GM12878 (cell line): ENCODE measurements at regions of chr16 and their contacts with region 1.

Region 1: GRCh38 chr16:81006814-81007696 is at the starts of genes CENPN and CMC2:
- DNase-seq: peak; percentile 95
- ATAC-seq: peak; percentile 87
- H3K4me3 ChIP-seq: peak within 1 kb of the TSS; percentile 93
- H3K27ac ChIP-seq: peak within 1 kb of the TSS; percentile 100
- H3K4me1 ChIP-seq: peaks cover 9% of the 10 kb centered on the region
- H3K27me3 ChIP-seq: no peaks in the 10 kb centered on the region
- CTCF ChIP-seq: 0 out of 6 replicates have a peak, but pooled peaks of 2 of the 3 experiments have one; percentile 1 to 7
- EP300 ChIP-seq: peak in 1 of 2 experiments; percentile 54; a peak in 2 of 4 replicates
- POLR2A ChIP-seq: peak; percentile 71
- RAD21 ChIP-seq: no peak
- polyA plus RNA-seq, gene CENPN: 134 to 143 TPM
- polyA plus RNA-seq, gene CMC2: 248 to 251 TPM

Region 2: GRCh38 chr16:80816365-80816764 is 190.7 kb before region 1 on chr16:
- CTCF ChIA-PET with region 1: no interaction called
- POLR2A ChIA-PET with region 1: no interaction called
- RAD21 ChIA-PET with region 1: no interaction called
- SMC1A ChIA-PET with region 1: no interaction called
- in situ Hi-C with region 1: no loop called
- intact Hi-C with region 1: no loop called
- DNase-seq: no peak
- ATAC-seq: no peak
- H3K4me3 ChIP-seq: no peak overlapping the region
- H3K27ac ChIP-seq: no peak overlapping the region
- H3K4me1 ChIP-seq: no peaks in the 10 kb centered on the region
- H3K27me3 ChIP-seq: no peaks in the 10 kb centered on the region
- CTCF ChIP-seq: no peak
- EP300 ChIP-seq: no peak
- POLR2A ChIP-seq: no peak
- RAD21 ChIP-seq: no peak

Region 3: DNA sequence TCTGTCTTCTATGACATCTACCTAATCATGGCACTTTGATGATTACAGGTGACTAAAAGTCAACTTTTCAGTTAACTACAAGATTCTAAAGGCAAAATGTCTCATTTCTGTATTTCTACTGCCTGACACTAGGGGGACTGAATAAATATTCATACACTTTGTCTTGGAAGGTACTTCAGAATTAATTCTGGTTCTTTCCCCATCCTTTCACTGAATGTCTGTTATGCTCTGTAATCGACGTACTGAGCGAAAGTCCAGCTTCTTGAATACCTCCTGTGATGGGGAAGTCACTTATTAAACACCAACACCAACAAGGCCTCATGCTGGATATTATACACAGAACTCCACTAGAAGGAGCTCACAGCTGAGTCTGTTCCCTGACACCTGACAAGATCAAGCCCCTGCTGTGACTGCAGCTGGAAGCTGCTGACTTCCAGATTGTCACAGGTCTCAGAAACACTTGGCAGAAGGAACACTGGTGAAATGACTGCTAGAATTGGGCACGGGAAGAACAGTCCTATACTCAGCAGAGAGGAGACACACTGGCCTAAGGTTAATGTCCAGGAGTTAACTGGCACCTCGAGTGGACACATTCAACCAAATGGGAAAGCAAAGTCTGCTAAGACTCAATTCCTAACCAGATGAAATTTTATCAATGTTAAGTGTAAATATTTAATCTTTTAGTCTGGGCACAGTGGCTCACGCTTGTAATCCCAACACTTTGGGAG is 32.2 kb before region 1 on chr16:
- CTCF ChIA-PET with region 1: interaction called, 11 read pairs
- POLR2A ChIA-PET with region 1: no interaction called
- RAD21 ChIA-PET with region 1: interaction called, 3 read pairs
- SMC1A ChIA-PET with region 1: interaction called, 5 read pairs
- in situ Hi-C with region 1: no loop called
- intact Hi-C with region 1: no loop called
- DNase-seq: no peak
- ATAC-seq: peak; percentile 49
- H3K4me3 ChIP-seq: no peak overlapping the region
- H3K27ac ChIP-seq: no peak overlapping the region
- H3K4me1 ChIP-seq: 0 out of 2 replicates have a peak, but pooled peaks cover 3% of the 10 kb centered on the region
- H3K27me3 ChIP-seq: no peaks in the 10 kb centered on the region
- CTCF ChIP-seq: peak; percentile 23 to 36 (median 26); a peak in 5 of 6 replicates
- EP300 ChIP-seq: no peak
- POLR2A ChIP-seq: no peak
- RAD21 ChIP-seq: 0 out of 2 replicates have a peak, but pooled peaks have one; percentile 5

Region 4: GRCh38 chr16:80986557-80986956 is 20.5 kb before region 1 on chr16:
- CTCF ChIA-PET with region 1: interaction called, 20 read pairs
- POLR2A ChIA-PET with region 1: interaction called, 4 read pairs
- RAD21 ChIA-PET with region 1: interaction called, 3 read pairs
- SMC1A ChIA-PET with region 1: interaction called, 4 read pairs
- in situ Hi-C with region 1: no loop called
- intact Hi-C with region 1: no loop called
- DNase-seq: no peak
- ATAC-seq: no peak
- H3K4me3 ChIP-seq: no peak overlapping the region
- H3K27ac ChIP-seq: no peak overlapping the region
- H3K4me1 ChIP-seq: no peaks in the 10 kb centered on the region
- H3K27me3 ChIP-seq: no peaks in the 10 kb centered on the region
- CTCF ChIP-seq: no peak
- EP300 ChIP-seq: no peak
- POLR2A ChIP-seq: no peak
- RAD21 ChIP-seq: no peak

Region 5: DNA sequence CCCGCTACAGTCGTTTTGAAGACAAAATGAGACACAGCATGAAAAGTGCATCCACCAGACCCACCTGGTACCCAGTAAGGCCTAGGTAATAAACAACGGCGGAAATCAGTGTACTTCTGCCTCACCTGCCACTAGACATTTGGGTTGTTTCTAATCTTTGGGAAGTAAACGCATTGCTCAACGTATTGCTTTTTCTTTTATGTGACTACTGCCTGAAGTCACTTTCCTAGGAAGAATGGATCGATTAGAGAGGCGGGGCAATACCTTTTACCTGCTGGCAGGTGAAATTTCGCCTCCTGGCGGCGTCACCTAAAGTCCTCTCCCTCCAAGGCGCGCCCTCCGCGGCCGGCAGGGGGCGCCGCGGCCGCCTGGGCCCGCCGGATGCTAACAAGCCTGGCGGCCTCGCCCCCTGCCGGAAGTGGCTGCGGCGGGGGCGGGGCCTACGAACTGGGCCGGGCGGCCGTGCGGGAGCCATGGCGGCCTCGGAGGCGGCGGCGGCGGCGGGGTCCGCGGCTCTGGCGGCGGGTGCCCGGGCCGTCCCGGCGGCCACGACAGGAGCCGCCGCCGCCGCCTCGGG is 28.4 kb after region 1 on chr16 and contains the start of gene ATMIN:
- CTCF ChIA-PET with region 1: interaction called, 67 read pairs
- POLR2A ChIA-PET with region 1: interaction called, 25 read pairs
- RAD21 ChIA-PET with region 1: interaction called, 6 read pairs
- SMC1A ChIA-PET with region 1: interaction called, 16 read pairs
- in situ Hi-C with region 1: no loop called
- intact Hi-C with region 1: loop called (anchors 2 kb)
- DNase-seq: peak; percentile 15
- ATAC-seq: peak; percentile 97
- H3K4me3 ChIP-seq: peak within 1 kb of the TSS; percentile 81
- H3K27ac ChIP-seq: peak within 1 kb of the TSS; percentile 32; the same call in 1 of the 2 replicates
- H3K4me1 ChIP-seq: no peaks in the 10 kb centered on the region
- H3K27me3 ChIP-seq: no peaks in the 10 kb centered on the region
- CTCF ChIP-seq: peak; percentile 88 to 99 (median 98)
- EP300 ChIP-seq: no peak
- POLR2A ChIP-seq: peak; percentile 63
- RAD21 ChIP-seq: peak; percentile 57
- polyA plus RNA-seq, gene ATMIN: 5.2 to 8.7 TPM

Region 6: DNA sequence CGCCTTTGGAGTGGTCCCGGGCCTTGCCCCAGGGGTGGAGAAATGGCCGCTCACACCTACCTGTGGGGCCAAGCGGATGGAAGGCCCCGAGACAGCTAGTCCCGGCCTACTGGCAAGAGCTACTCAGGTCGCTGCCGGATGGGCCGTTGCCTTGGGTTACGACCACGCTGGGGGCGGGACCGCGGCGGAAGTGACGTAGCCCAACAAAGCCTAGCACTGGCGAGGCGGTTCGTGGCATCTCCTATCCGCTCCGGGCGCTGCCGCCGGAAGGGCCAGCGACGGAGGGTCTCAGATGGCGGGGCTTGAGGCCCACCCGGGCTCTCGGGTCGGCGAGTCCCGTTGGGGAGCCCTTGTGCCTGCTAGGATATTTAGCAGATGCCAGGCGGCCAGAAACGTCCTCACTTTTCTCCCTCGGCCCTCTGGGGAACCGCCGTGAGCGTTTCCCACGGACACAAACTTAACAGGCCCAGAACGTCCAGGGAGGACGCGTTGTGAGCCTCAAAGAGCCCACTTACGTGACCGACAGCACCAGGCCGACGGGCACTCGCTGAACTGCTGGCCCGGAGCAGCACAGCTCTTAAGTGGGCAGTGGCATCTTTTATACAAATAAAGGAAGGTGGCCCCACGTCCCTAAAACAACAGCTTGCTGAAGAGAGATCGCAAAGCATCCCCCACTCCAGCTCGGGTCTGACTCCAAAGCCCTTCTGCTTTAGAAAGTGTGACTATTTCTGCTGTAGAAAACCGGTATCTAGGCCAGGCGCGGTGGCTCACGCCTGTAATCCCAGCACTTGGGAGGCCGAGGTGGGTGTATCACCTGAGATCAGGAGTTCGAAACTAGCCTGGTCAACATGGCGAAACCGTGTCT is 70.3 kb after region 1 on chr16 and contains the start of gene C16orf46:
- CTCF ChIA-PET with region 1: interaction called, 6 read pairs
- POLR2A ChIA-PET with region 1: interaction called, 6 read pairs
- RAD21 ChIA-PET with region 1: interaction called, 9 read pairs
- SMC1A ChIA-PET with region 1: interaction called, 3 read pairs
- in situ Hi-C with region 1: no loop called
- intact Hi-C with region 1: loop called (anchors 1 kb)
- DNase-seq: peak; percentile 88
- ATAC-seq: peak; percentile 95
- H3K4me3 ChIP-seq: peak within 1 kb of the TSS; percentile 78
- H3K27ac ChIP-seq: peak within 1 kb of the TSS; percentile 69
- H3K4me1 ChIP-seq: peaks cover 5% of the 10 kb centered on the region
- H3K27me3 ChIP-seq: no peaks in the 10 kb centered on the region
- CTCF ChIP-seq: no peak
- EP300 ChIP-seq: no peak
- POLR2A ChIP-seq: peak; percentile 96
- RAD21 ChIP-seq: no peak
- polyA plus RNA-seq, gene C16orf46: 0.04 TPM in 1 of 2 experiments, not detected in the other

Region 7: GRCh38 chr16:81314603-81315270 is 307.7 kb after region 1 on chr16 and contains the start of gene GAN:
- CTCF ChIA-PET with region 1: no interaction called
- POLR2A ChIA-PET with region 1: no interaction called
- RAD21 ChIA-PET with region 1: no interaction called
- SMC1A ChIA-PET with region 1: interaction called, 3 read pairs
- in situ Hi-C with region 1: no loop called
- intact Hi-C with region 1: loop called (anchors 10 kb)
- DNase-seq: peak; percentile 82
- ATAC-seq: peak; percentile 98
- H3K4me3 ChIP-seq: peak within 1 kb of the TSS; percentile 96
- H3K27ac ChIP-seq: peak within 1 kb of the TSS; percentile 84
- H3K4me1 ChIP-seq: peaks cover 7% of the 10 kb centered on the region
- H3K27me3 ChIP-seq: no peaks in the 10 kb centered on the region
- CTCF ChIP-seq: no peak
- EP300 ChIP-seq: no peak
- POLR2A ChIP-seq: peak; percentile 88
- RAD21 ChIP-seq: no peak
- polyA plus RNA-seq, gene GAN: 0.42 to 1.2 TPM

Region 8: DNA sequence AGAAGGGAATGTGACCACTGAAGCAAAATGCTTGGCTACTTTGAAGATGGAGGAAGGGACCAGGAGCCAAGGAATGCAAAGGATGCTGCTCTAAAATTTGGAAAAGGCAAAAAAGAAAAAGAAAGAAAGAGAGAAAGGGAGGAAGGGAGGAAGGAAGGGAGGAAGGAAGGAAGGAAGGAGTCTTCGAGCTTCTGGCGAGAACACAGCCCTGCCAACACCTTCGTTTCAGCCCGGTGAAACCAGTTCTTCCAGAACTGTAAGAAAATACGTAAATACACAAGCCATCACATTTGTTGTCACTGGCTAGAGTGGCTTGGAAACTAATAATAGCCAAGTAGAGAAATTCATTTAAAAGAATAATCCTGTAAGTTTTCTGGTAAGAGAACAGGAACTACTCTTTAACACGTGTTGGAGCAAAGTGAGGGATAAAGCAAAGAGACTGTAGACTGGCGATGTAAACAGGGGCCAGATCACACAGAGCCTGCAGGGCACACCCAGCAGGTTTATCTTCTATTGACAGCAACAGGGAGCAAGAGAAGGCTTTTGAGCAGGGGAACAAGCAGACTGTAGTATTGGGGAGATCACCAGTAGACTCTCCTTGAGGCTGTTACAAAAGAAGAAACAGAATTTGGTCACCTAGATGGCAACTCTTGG is 1351.6 kb after region 1 on chr16:
- CTCF ChIA-PET with region 1: no interaction called
- POLR2A ChIA-PET with region 1: no interaction called
- RAD21 ChIA-PET with region 1: no interaction called
- SMC1A ChIA-PET with region 1: no interaction called
- in situ Hi-C with region 1: no loop called
- intact Hi-C with region 1: no loop called
- DNase-seq: no peak
- ATAC-seq: no peak
- H3K4me3 ChIP-seq: no peak overlapping the region
- H3K27ac ChIP-seq: no peak overlapping the region
- H3K4me1 ChIP-seq: no peaks in the 10 kb centered on the region
- H3K27me3 ChIP-seq: no peaks in the 10 kb centered on the region; a peak in 1 of 4 replicates
- CTCF ChIP-seq: no peak
- EP300 ChIP-seq: no peak
- POLR2A ChIP-seq: no peak
- RAD21 ChIP-seq: no peak

Region 9: DNA sequence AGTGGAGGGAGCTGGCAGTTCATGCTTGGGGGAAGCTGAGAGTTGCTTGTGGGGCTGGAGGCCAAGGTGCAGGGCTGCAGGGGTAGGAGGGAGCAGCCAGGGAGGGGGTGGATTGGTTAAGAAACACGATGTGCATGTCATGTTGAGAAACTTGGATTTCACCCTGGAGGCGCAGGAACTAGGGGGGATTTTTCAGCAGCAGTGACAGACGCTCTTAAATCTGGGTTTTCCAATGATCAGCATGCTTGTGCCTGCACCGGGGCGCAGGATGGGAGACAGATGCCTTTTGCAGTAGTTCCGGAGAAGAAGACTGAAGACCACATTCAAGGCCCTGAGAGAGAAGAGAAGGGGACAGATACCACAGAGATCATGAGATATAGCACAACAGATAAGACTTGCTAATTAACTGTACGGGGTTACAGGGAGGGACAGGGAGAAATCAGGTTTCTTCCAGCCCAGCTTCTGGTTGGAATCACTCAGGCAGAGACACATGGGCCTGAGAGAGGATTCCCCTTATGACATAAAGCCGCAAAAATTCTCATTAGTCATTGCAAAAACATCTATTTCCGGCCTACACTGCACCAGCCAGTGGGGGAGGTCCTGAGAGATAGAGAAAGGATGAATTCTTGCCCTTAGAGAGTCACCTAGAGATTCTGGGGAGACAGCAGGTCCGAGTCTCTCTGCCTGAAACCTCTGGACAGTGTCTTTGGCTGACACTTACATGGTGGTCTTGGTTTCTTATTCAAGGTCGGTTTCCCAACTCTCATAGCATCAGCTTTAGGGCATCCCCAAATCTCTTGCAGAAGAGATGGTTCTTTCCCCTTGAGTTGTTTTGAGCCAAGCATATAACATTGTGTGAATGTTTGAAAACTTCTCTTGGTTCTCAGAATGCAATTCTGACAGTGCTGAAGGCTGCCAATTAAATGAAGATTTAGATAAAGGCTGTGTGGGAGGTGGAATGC is 1646.8 kb after region 1 on chr16:
- CTCF ChIA-PET with region 1: no interaction called
- POLR2A ChIA-PET with region 1: no interaction called
- RAD21 ChIA-PET with region 1: no interaction called
- SMC1A ChIA-PET with region 1: no interaction called
- in situ Hi-C with region 1: no loop called
- intact Hi-C with region 1: loop called (anchors 10 kb)
- DNase-seq: peak; percentile 90
- ATAC-seq: peak; percentile 76
- H3K4me3 ChIP-seq: peak overlapping the region; percentile 20; the same call in 1 of the 2 replicates
- H3K27ac ChIP-seq: peak overlapping the region; percentile 96
- H3K4me1 ChIP-seq: peaks cover 56% of the 10 kb centered on the region
- H3K27me3 ChIP-seq: no peaks in the 10 kb centered on the region
- CTCF ChIP-seq: no peak
- EP300 ChIP-seq: peak; percentile 85 to 89
- POLR2A ChIP-seq: peak; percentile 64
- RAD21 ChIP-seq: no peak